ENCODE measurements at regions of chr19 and their contacts with region 1.

Region 1: GRCh38 chr19:39924389-39924788 is 10.0 kb downstream of the FCGBP start:
- DNase-seq: no peak
- ATAC-seq: peak; percentile 6; the same call in 1 of the 2 replicates
- H3K4me3 ChIP-seq: no peak overlapping the region
- H3K27ac ChIP-seq: no peak overlapping the region
- H3K4me1 ChIP-seq: no peaks in the 10 kb centered on the region
- H3K27me3 ChIP-seq: peaks cover 5% of the 10 kb centered on the region; the same call in 1 of the 2 replicates
- CTCF ChIP-seq: no peak

Region 2: GRCh38 chr19:39480337-39481228 is 443.8 kb before region 1 on chr19 and contains the start of gene TIMM50:
- CTCF ChIA-PET with region 1: no interaction called
- POLR2A ChIA-PET with region 1: interaction called, 10 read pairs
- in situ Hi-C with region 1: no loop called
- intact Hi-C with region 1: no loop called
- DNase-seq: peak; percentile 100
- ATAC-seq: peak; percentile 96
- H3K4me3 ChIP-seq: peak within 1 kb of the TSS; percentile 39 to 55
- H3K27ac ChIP-seq: peak within 1 kb of the TSS; percentile 86
- H3K4me1 ChIP-seq: peaks cover 23% of the 10 kb centered on the region
- H3K27me3 ChIP-seq: no peaks in the 10 kb centered on the region
- CTCF ChIP-seq: no peak
- total RNA-seq, gene TIMM50: 1,837 TPM

Region 3: GRCh38 chr19:39590265-39590664 is 334.1 kb before region 1 on chr19:
- CTCF ChIA-PET with region 1: interaction called, 13 read pairs
- POLR2A ChIA-PET with region 1: no interaction called
- in situ Hi-C with region 1: no loop called
- intact Hi-C with region 1: no loop called
- DNase-seq: no peak
- ATAC-seq: no peak
- H3K4me3 ChIP-seq: no peak overlapping the region
- H3K27ac ChIP-seq: no peak overlapping the region
- H3K4me1 ChIP-seq: no peaks in the 10 kb centered on the region
- H3K27me3 ChIP-seq: peaks cover 77% of the 10 kb centered on the region
- CTCF ChIP-seq: peak; percentile 33; the same call in 1 of the 2 replicates

Region 4: GRCh38 chr19:39963898-39964297 is 39.5 kb after region 1 on chr19:
- CTCF ChIA-PET with region 1: interaction called, 10 read pairs
- POLR2A ChIA-PET with region 1: interaction called, 13 read pairs
- in situ Hi-C with region 1: no loop called
- intact Hi-C with region 1: no loop called
- DNase-seq: no peak
- ATAC-seq: no peak
- H3K4me3 ChIP-seq: no peak overlapping the region
- H3K27ac ChIP-seq: no peak overlapping the region
- H3K4me1 ChIP-seq: no peaks in the 10 kb centered on the region
- H3K27me3 ChIP-seq: no peaks in the 10 kb centered on the region
- CTCF ChIP-seq: no peak

Region 5: DNA sequence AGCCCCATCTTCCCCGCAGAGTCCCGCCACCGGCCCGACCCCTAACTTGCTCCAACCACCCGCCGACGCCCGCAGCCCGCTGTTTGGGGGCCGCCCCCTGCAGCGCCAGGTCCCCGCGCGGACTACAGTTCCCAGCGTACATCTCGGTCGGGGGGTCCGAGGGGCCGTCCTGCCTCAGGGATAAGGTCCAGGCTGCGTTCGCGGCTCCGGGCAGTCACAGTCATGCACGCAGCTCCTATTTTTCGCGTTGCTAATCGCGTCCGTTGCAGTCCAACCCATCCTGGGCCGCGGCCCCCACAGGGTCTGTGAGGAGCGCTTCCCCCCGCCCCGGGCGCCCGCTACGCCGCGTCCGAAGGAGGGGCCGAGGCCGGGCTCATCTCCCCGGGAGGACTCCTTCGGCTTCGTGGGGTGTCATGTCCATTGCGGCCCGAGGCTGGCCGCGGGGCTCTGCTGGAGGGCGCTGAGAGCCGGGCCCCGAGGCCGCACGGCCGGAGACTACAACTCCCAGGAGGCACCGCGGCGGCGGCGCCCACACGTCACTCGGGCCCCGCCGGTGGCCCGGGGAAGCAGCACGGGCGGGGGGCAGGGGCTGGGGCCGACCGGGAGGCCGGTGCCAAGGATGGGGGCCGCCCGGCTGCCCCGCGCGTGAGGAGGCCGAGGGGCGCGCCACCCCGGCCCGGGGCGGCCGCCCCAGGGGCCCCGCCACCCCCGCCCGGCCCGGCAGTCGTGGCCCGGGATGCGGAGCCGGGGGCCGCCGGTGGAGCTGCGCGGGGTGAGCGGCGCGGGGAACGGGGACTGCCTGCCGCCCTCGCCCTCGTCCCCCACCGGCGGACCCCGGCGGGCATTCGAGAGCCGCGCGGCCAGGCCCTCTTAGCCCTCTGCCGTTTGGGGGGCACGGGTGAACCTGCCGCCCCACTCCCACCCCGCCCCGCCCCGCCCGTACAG is 266.8 kb after region 1 on chr19 and contains the start of gene MAP3K10:
- CTCF ChIA-PET with region 1: no interaction called
- POLR2A ChIA-PET with region 1: interaction called, 10 read pairs
- in situ Hi-C with region 1: no loop called
- intact Hi-C with region 1: no loop called
- DNase-seq: peak; percentile 99
- ATAC-seq: peak; percentile 97
- H3K4me3 ChIP-seq: peak within 1 kb of the TSS; percentile 36 to 57
- H3K27ac ChIP-seq: peak within 1 kb of the TSS; percentile 49
- H3K4me1 ChIP-seq: peaks cover 23% of the 10 kb centered on the region
- H3K27me3 ChIP-seq: peaks cover 9% of the 10 kb centered on the region
- CTCF ChIP-seq: no peak
- total RNA-seq, gene MAP3K10: 255 TPM

Measured in Panc1 (cell line).